Mammary epithelial cell (primary cell): ENCODE measurements at regions of chr1 and their contacts with region 1.

Region 1: DNA sequence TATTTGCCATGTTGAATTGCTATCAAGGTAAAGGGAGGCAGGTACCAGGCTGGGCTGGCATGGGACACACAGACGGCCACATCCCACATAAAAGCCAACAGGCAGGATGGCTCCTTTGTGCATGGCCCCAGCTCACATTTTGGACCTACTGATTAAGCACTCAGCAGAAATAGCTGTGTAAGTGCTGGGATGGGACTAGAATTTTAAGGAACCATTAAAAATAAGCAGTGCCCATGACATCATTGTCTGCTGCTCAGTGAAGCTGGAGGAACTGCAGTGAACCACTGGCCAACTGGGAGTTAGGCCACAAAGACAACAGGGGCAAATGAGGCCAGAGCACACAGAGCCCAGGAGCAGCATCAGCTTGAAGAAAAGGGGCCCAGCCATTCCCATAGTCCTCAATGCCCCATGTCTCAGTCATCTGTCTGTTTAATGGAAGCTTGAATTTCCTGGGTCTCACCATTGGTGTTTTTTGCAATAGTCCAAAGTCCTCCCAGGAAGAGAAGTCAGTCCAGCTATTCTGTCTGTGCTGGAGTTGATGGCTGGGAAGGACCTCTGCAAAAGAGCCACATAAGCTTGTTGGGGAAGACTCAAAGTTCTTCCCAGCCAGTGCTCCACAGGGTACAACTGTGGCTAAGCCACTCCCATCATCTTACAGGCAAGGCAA is 45.3 kb upstream of the TNR start:
- DNase-seq: no peak
- H3K4me3 ChIP-seq: no peak overlapping the region
- H3K27ac ChIP-seq: no peak overlapping the region
- H3K4me1 ChIP-seq: no peaks in the 10 kb centered on the region
- H3K27me3 ChIP-seq: no peaks in the 10 kb centered on the region
- CTCF ChIP-seq: no peak

Region 2: DNA sequence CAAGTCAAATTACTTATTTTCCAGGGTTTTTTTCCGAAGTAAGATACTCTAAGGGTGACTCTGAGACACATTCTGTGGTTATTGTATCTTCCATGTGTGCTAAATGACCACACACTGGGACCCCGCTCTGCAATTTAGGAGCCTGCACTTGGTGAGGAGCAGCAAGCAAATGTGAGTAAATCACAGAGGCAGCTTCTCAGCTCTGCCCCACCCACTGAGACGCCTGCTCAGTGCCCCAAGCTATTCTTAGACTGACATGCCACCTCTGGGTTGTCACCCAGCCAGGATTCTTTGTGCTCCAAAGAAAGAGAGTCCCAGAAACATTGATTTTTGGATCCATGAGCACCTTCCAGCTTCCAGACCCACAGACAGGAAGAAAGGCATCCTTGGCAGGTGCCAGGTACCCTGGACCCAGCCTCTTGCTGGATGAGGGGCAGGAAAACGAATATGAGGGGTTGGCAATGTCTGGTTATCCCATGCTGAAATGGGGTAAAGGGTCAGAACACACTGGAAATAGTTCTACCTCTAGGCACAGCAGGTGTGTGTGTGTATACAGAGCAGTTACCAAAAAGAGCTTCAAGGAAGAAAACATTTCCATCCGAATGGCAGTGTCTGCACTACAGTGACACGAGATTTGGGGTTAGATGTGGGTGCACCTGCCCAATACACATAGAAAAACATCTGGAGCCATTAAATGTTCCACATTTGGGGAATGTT is 86.5 kb before region 1 on chr1:
- CTCF ChIA-PET with region 1: no interaction called
- dilution Hi-C with region 1: loop called (anchors 5 kb)
- in situ Hi-C with region 1: no loop called
- intact Hi-C with region 1: no loop called
- DNase-seq: no peak
- H3K4me3 ChIP-seq: no peak overlapping the region
- H3K27ac ChIP-seq: no peak overlapping the region
- H3K4me1 ChIP-seq: no peaks in the 10 kb centered on the region
- H3K27me3 ChIP-seq: peaks cover 6% of the 10 kb centered on the region
- CTCF ChIP-seq: no peak

Region 3: GRCh38 chr1:175830500-175830899 is 41.8 kb after region 1 on chr1:
- CTCF ChIA-PET with region 1: no interaction called
- dilution Hi-C with region 1: no loop called
- in situ Hi-C with region 1: no loop called
- intact Hi-C with region 1: no loop called
- DNase-seq: peak; percentile 25
- H3K4me3 ChIP-seq: no peak overlapping the region
- H3K27ac ChIP-seq: no peak overlapping the region
- H3K4me1 ChIP-seq: no peaks in the 10 kb centered on the region
- H3K27me3 ChIP-seq: no peaks in the 10 kb centered on the region
- CTCF ChIP-seq: no peak

Region 4: DNA sequence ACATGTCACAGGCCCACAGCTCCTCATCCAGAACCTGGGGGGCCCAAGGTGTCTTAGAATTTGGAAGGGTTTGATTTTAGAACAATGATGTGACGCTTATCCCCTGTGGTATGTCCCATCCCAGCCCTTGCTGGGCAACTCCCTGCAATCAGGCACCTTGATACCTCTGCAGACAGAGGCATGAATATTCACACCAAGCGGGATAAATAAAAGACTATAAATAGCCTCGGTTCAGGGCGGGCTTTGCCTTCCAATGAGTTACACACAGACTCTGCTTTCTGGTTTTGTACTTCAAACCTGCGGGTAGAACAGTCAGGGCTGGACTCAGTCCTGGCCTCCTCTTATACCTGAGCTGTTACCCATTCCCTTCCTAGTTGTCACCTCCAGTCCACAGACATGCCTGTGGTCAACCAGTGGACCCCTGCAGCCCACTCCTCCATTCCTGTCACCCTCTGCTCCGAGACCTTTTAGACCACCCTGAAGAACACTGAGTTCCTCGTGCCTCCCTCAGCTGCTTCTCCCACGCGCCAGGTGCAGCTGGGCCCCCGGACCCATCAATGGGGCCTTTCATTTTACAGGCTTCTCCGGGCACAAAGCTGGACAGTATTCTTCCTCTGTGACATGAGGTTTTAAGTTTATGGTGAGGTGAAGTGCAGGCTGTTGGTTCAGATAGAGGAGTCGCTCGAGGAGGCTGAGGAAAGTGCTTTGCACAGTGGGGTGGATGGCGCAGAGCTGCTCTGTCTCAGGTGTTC is 74.8 kb after region 1 on chr1:
- CTCF ChIA-PET with region 1: no interaction called
- dilution Hi-C with region 1: loop called (anchors 5 kb)
- in situ Hi-C with region 1: no loop called
- intact Hi-C with region 1: no loop called
- DNase-seq: no peak
- H3K4me3 ChIP-seq: no peak overlapping the region
- H3K27ac ChIP-seq: no peak overlapping the region
- H3K4me1 ChIP-seq: no peaks in the 10 kb centered on the region
- H3K27me3 ChIP-seq: no peaks in the 10 kb centered on the region
- CTCF ChIP-seq: no peak